CD4-positive, alpha-beta T cell (primary cell): ENCODE measurements at regions of chr22 and their contacts with region 1.

Region 1: DNA sequence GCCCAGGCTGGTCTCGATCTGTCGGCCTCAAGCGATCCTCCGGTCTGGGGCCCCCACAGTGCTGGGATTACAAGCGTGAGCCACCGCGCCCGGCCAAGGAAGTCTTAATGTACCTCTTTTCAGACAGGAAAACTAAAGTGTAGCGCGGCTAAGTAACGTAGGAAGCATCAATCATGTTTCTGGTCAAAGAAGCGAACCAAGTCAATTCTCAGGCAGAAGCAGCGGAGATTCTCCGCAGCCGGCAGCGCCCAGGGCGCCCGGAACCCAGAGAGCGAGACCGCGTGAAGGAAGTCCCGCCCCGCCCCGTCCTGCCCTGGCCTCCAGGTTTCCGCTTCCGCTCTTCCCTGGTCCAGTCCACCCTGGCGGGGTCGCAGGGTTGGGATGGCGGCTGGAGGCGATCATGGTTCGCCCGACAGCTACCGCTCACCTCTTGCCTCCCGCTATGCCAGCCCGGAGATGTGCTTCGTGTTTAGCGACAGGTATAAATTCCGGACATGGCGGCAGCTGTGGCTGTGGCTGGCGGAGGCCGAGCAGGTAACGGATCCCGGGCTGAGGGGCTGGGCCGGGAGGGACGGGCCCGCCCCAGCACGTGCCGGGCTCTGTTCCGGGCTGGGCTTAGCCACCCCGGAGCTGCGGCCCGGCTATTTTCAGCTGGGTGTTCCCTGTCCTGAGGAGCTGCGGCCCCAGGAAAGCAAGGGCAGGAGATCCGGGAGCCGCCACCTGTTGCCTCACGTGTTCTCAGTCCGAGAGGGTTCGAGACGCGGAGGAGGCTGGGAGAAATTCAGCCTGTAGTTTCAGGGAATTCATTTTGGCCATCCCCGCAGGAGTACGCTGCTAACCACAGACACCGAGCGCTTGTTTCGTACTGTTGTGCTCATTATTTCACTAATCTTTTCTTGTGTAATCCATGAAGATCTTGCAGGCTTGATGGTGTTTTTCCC is at the start of gene ADSL:
- DNase-seq: peak; percentile 72 to 91 (median 80)
- ATAC-seq: peak; percentile 74
- H3K4me3 ChIP-seq: peak within 1 kb of the TSS; percentile 91
- H3K4me3 Mint-ChIP-seq: peak within 1 kb of the TSS; percentile 96
- H3K27ac ChIP-seq: peak within 1 kb of the TSS; percentile 81 to 89
- H3K27ac Mint-ChIP-seq: peak within 1 kb of the TSS; percentile 98
- H3K4me1 ChIP-seq: peaks cover 65% of the 10 kb centered on the region
- H3K4me1 Mint-ChIP-seq: peaks cover 52% of the 10 kb centered on the region
- H3K27me3 ChIP-seq: no peaks in the 10 kb centered on the region
- H3K27me3 Mint-ChIP-seq: no peaks in the 10 kb centered on the region
- CTCF ChIP-seq: no peak
- total RNA-seq, gene ADSL: 62.9 to 75.3 TPM

Region 2: DNA sequence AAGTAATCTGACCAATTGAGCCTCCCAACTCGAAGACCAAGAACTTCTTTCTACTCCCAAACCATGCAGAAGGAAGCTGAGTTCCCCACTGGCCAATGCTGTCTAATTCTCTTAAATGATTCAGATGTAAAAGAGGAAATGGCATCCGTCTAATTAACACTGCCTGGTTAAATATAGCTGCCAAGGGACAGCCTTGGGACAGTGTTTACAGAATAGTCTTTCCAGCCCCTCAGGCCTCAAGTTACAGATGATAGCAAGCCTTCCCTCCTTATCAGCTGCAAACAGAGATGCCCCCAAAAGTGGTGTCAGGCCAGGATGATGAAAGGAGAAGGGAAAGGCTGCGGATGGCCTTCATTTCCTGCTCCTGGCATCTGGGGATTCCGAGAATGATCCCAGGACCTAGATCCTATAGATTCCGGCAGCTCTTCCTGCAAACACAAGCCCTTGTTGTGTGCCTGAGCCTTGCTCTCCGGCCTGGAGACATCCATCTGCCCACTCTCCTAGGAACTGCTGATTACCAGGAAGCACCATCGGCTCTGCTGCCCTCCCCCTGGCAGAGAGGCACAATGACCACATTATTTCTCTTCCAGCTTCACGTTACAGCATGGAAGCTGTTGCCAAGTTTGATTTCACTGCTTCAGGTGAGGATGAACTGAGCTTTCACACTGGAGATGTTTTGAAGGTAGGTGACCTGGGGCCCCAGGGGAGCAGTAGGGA is 399.8 kb before region 1 on chr22:
- CTCF ChIA-PET with region 1: interaction called, 5 read pairs
- POLR2A ChIA-PET with region 1: no interaction called
- intact Hi-C with region 1: loop called (anchors 5 kb)
- DNase-seq: no peak
- ATAC-seq: no peak
- H3K4me3 ChIP-seq: no peak overlapping the region
- H3K4me3 Mint-ChIP-seq: peak overlapping the region; percentile 69
- H3K27ac ChIP-seq: peak overlapping the region; percentile 26 to 37
- H3K27ac Mint-ChIP-seq: no peak overlapping the region
- H3K4me1 ChIP-seq: peaks cover 94% of the 10 kb centered on the region
- H3K4me1 Mint-ChIP-seq: peaks cover 99% of the 10 kb centered on the region
- H3K27me3 ChIP-seq: no peaks in the 10 kb centered on the region
- H3K27me3 Mint-ChIP-seq: no peaks in the 10 kb centered on the region
- CTCF ChIP-seq: no peak

Region 3: DNA sequence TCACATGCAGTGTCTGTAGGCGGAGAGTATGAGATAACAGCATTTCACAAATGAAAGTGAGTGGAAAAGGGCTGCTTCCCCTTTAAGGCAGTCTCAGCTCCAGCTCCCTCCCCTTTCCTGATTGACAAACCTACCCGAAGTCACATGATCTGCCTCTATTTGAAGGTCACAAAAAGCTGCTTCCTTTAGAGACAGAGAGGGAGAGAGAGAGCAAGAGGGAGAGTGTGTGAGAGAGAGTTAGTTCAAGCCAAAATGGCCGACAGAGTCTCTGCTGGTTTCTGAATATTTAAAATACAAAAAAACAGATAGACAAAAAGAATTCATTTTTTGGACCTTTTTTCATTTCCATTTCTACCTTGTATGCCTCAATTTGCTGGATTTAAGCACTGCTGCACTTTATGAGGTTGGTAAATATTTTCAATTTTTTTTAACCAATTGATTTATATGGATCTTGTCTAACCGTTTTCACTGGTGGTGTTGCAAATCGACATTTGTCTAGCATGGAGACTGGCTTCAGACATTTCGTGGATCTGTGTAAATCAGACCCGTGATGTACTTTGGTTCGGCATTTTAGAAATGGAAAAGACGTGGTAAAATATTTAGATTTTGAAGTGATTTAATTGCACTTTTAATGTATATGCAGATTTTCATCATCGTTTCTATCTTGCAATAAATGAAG is 168.6 kb before region 1 on chr22 and contains the start of gene TNRC6B:
- CTCF ChIA-PET with region 1: interaction called, 14 read pairs
- POLR2A ChIA-PET with region 1: interaction called, 25 read pairs
- intact Hi-C with region 1: loop called (anchors 2 kb)
- DNase-seq: peak; percentile 36 to 97 (median 58)
- ATAC-seq: peak; percentile 80
- H3K4me3 ChIP-seq: peak within 1 kb of the TSS; percentile 74
- H3K4me3 Mint-ChIP-seq: peak within 1 kb of the TSS; percentile 90
- H3K27ac ChIP-seq: peak within 1 kb of the TSS; percentile 49 to 84
- H3K27ac Mint-ChIP-seq: peak within 1 kb of the TSS; percentile 90
- H3K4me1 ChIP-seq: peaks cover 47% of the 10 kb centered on the region
- H3K4me1 Mint-ChIP-seq: peaks cover 72% of the 10 kb centered on the region
- H3K27me3 ChIP-seq: no peaks in the 10 kb centered on the region
- H3K27me3 Mint-ChIP-seq: no peaks in the 10 kb centered on the region
- CTCF ChIP-seq: no peak
- total RNA-seq, gene TNRC6B: 110 to 111 TPM

Region 4: GRCh38 chr22:40243891-40244290 is 102.6 kb before region 1 on chr22:
- CTCF ChIA-PET with region 1: interaction called, 13 read pairs
- POLR2A ChIA-PET with region 1: interaction called, 3 read pairs
- intact Hi-C with region 1: loop called in 1 of 2 experiments (anchors 1 kb)
- DNase-seq: peak in 4 of 14 experiments; percentile 20 to 71 (median 57)
- ATAC-seq: no peak
- H3K4me3 ChIP-seq: peak overlapping the region; percentile 9
- H3K4me3 Mint-ChIP-seq: peak overlapping the region; percentile 80
- H3K27ac ChIP-seq: peak overlapping the region in 1 of 2 donors; percentile 18
- H3K27ac Mint-ChIP-seq: peak overlapping the region; percentile 86
- H3K4me1 ChIP-seq: peaks cover 82% of the 10 kb centered on the region
- H3K4me1 Mint-ChIP-seq: peaks cover 93% of the 10 kb centered on the region
- H3K27me3 ChIP-seq: no peaks in the 10 kb centered on the region
- H3K27me3 Mint-ChIP-seq: no peaks in the 10 kb centered on the region
- CTCF ChIP-seq: no peak

Region 5: DNA sequence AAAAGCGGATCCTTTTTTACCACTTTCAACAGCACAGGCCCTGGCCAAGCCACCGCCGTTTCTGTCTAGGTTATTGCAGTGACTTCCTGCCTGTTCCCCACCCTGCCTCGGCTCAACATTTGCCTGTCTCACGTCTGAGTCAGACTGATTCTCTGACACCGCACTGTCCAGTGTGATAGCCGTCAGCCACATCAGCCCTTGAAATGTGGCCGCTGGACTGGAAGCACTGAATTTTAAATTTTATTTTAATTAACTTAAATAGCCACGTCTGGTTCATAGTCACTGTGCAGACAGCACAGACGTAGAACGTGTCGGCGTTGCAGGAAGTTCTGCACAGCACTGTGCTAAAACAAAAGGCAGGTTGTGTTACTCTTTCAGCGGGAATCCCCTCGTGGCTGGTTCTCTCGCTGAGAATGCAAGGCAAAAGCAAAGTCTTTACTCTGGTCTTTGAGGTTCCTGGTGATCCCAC is 56.4 kb before region 1 on chr22:
- CTCF ChIA-PET with region 1: interaction called, 11 read pairs
- POLR2A ChIA-PET with region 1: interaction called, 26 read pairs
- intact Hi-C with region 1: loop called in 1 of 2 experiments (anchors 2 kb)
- DNase-seq: peak; percentile 49 to 90 (median 70)
- ATAC-seq: peak; percentile 85
- H3K4me3 ChIP-seq: peak overlapping the region; percentile 2
- H3K4me3 Mint-ChIP-seq: peak overlapping the region; percentile 70
- H3K27ac ChIP-seq: peak overlapping the region; percentile 83 to 94
- H3K27ac Mint-ChIP-seq: peak overlapping the region; percentile 98
- H3K4me1 ChIP-seq: peaks cover 44% of the 10 kb centered on the region
- H3K4me1 Mint-ChIP-seq: peaks cover 65% of the 10 kb centered on the region
- H3K27me3 ChIP-seq: no peaks in the 10 kb centered on the region
- H3K27me3 Mint-ChIP-seq: no peaks in the 10 kb centered on the region
- CTCF ChIP-seq: no peak

Region 6: GRCh38 chr22:40332319-40332781 is 14.1 kb before region 1 on chr22:
- CTCF ChIA-PET with region 1: interaction called, 37 read pairs
- POLR2A ChIA-PET with region 1: interaction called, 75 read pairs
- intact Hi-C with region 1: loop called in 1 of 2 experiments (anchors 1 kb)
- DNase-seq: peak in 4 of 14 experiments; percentile 30 to 48 (median 40)
- ATAC-seq: peak; percentile 74
- H3K4me3 ChIP-seq: no peak overlapping the region
- H3K4me3 Mint-ChIP-seq: peak overlapping the region; percentile 78
- H3K27ac ChIP-seq: peak overlapping the region in 1 of 2 donors; percentile 3
- H3K27ac Mint-ChIP-seq: peak overlapping the region; percentile 97
- H3K4me1 ChIP-seq: peaks cover 72% of the 10 kb centered on the region
- H3K4me1 Mint-ChIP-seq: peaks cover 96% of the 10 kb centered on the region
- H3K27me3 ChIP-seq: no peaks in the 10 kb centered on the region
- H3K27me3 Mint-ChIP-seq: no peaks in the 10 kb centered on the region
- CTCF ChIP-seq: no peak

Region 7: DNA sequence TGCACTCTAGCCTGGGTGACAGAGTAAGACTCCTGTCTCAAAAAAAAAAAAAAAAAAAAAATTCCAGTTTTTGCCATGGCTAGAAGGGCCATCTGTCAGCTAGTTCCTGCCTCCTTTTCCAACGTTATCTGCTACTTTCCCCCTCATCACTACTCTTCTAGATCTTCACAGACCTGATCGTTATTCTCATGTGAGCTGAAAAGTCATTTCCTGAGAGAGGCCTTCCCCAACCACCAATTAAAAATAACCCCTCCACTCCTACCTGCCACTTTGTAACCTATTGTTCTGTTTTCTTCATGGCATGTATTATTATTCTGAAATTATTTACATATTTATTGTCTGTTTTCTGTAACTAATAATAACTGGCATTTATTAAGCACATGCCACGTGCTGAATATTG is 48.2 kb after region 1 on chr22:
- CTCF ChIA-PET with region 1: no interaction called
- POLR2A ChIA-PET with region 1: no interaction called
- intact Hi-C with region 1: no loop called
- DNase-seq: no peak
- ATAC-seq: no peak
- H3K4me3 ChIP-seq: no peak overlapping the region
- H3K4me3 Mint-ChIP-seq: no peak overlapping the region
- H3K27ac ChIP-seq: no peak overlapping the region
- H3K27ac Mint-ChIP-seq: peak overlapping the region; percentile 57
- H3K4me1 ChIP-seq: peaks cover 33% of the 10 kb centered on the region
- H3K4me1 Mint-ChIP-seq: peaks cover 88% of the 10 kb centered on the region
- H3K27me3 ChIP-seq: no peaks in the 10 kb centered on the region
- H3K27me3 Mint-ChIP-seq: no peaks in the 10 kb centered on the region
- CTCF ChIP-seq: no peak